Sigmoid colon (tissue), 7 donors: ENCODE measurements at regions of chr7 and their contacts with region 1.

Region 1: DNA sequence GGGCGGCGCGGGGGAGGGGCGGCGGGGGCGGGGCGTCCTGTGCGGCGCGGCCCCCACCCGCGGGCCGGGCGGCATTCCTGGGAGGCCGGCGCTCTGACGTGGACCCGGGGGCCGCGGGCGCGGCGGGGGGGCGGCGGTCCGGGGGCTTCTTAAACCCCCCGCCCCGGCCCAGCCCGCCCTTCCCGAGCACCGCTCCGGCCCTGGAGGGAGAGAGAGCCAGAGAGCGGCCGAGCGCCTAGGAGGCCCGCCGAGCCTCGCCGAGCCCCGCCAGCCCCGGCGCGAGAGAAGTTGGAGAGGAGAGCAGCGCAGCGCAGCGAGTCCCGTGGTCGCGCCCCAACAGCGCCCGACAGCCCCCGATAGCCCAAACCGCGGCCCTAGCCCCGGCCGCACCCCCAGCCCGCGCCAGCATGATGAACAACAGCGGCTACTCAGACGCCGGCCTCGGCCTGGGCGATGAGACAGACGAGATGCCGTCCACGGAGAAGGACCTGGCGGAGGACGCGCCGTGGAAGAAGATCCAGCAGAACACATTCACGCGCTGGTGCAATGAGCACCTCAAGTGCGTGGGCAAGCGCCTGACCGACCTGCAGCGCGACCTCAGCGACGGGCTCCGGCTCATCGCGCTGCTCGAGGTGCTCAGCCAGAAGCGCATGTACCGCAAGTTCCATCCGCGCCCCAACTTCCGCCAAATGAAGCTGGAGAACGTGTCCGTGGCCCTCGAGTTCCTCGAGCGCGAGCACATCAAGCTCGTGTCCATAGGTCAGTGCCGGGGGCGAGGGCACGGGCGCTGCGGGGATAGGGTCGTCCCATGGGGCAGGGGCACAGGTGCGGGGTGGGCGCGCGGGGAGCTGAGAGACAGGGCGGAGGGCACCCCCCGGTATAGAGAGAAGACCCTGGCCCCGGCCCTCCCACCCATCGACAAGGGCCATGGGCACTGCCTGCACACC is at the start of gene FLNC:
- DNase-seq: peak; percentile 87
- H3K4me3 ChIP-seq: peak within 1 kb of the TSS; percentile 66 to 90 (median 83)
- H3K27ac ChIP-seq: peak within 1 kb of the TSS; percentile 95 to 99 (median 98)
- H3K4me1 ChIP-seq: peaks cover 2 to 79% (median 67%) of the 10 kb centered on the region in 4 donors
- H3K27me3 ChIP-seq: no peaks in the 10 kb centered on the region
- CTCF ChIP-seq: no peak
- EP300 ChIP-seq: no peak
- POLR2A ChIP-seq: peak; percentile 72 to 78
- total RNA-seq, gene FLNC: 95.3 to 489 (median 242) TPM

Region 2: GRCh38 chr7:128755819-128756476 is 74.6 kb before region 1 on chr7:
- intact Hi-C with region 1: loop called (anchors 2 kb)
- DNase-seq: peak; percentile 87
- H3K4me3 ChIP-seq: no peak overlapping the region
- H3K27ac ChIP-seq: peak overlapping the region; percentile 84 to 93 (median 91)
- H3K4me1 ChIP-seq: peaks cover 0 to 41% (median 34%) of the 10 kb centered on the region in 4 donors
- H3K27me3 ChIP-seq: no peaks in the 10 kb centered on the region
- CTCF ChIP-seq: no peak
- EP300 ChIP-seq: peak in 3 of 4 donors; percentile 79 to 97 (median 84)
- POLR2A ChIP-seq: no peak

Region 3: DNA sequence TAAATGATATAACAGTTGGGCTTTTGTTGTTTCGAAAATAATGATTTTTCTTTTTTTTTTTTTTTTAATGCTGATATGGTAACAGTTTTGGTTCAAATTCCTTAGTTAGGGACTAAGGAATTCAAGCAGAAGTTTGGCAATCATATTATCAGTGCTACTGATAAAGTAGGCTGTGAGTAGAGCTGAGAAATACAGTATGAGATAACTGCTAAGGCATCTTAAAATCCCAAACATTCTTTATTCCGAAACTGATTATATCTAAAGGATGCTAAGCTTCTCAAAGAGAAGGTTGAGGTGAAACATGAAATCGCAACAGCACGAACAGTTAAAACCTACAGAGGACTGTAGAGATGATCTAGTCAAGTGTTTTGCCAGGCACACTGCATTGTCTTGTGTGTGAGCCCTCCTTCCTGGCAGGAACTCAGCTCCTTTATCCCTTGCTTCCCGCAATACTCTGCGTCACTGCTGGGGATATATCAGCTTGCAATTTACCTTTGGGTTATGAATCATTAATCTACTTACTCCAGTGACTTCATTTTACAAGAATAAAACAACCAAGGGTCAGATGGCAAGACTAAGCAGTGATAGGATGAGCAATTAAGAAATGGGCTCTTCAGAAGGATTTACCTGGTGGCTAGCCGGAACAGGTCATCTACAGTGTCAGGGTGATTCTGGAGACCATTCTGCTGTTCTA is 143.9 kb after region 1 on chr7:
- intact Hi-C with region 1: no loop called
- DNase-seq: no peak
- H3K4me3 ChIP-seq: no peak overlapping the region
- H3K27ac ChIP-seq: no peak overlapping the region
- H3K4me1 ChIP-seq: no peaks in the 10 kb centered on the region
- H3K27me3 ChIP-seq: no peaks in the 10 kb centered on the region
- CTCF ChIP-seq: no peak
- EP300 ChIP-seq: no peak
- POLR2A ChIP-seq: no peak